Activated CD8-positive, alpha-beta memory T cell treated with anti-CD3 and anti-CD28 coated beads, Interleukin-2, amount 10 ng/mL, durations not matched to agents 7 days and 5 days (primary cell): ENCODE measurements at regions of chr1 and their contacts with region 1.

Region 1: GRCh38 chr1:230120926-230121381 is 53.9 kb downstream of the GALNT2 start:
- DNase-seq: no peak
- ATAC-seq: no peak
- H3K4me3 Mint-ChIP-seq: no peak overlapping the region
- H3K27ac Mint-ChIP-seq: no peak overlapping the region
- H3K4me1 Mint-ChIP-seq: peaks cover 53% of the 10 kb centered on the region
- H3K27me3 Mint-ChIP-seq: peaks cover 7% of the 10 kb centered on the region

Region 2: DNA sequence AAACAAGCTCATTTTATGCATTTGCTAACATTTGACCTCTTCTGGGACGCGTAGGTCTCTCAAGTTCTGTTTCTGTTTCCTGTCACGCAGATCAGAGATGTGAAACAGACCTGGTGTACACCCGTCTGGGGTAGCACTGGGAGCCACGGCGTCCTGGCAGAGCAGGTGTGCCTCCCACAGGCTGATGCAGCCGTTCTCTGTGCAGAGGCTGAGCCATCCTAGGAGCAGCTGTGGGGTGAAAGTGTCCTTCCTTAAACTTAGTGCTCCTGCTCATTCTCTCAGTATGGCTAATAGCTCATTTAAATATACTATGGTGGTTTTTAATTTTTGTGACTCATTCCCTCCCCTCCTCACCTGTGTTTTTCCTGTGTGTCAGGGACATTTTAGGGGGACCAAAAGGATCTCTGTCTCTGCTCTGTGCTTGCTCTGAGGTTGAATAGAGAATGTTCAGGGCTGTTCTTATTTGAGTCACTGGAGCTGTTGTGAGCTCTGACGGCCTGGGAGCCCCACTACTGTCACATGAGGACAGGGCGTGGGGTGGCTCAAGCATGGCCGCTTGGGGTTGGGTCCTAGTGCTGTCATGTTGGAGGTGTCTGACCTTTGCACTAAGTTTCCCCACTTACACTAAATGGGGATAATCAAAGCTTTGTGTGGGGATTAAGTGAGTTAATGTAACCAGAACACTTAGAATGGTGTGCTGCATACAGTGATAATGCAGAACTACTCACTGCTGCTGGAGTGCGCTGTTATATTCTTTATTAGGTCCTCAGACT is 10.9 kb before region 1 on chr1:
- CTCF ChIA-PET with region 1: interaction called, 36 read pairs
- DNase-seq: peak; percentile 83
- ATAC-seq: peak; percentile 84
- H3K4me3 Mint-ChIP-seq: peak overlapping the region; percentile 5
- H3K27ac Mint-ChIP-seq: peak overlapping the region; percentile 76
- H3K4me1 Mint-ChIP-seq: peaks cover 70% of the 10 kb centered on the region
- H3K27me3 Mint-ChIP-seq: no peaks in the 10 kb centered on the region

Region 3: GRCh38 chr1:230167419-230167852 is 46.5 kb after region 1 on chr1:
- CTCF ChIA-PET with region 1: interaction called, 16 read pairs
- DNase-seq: peak; percentile 61
- ATAC-seq: peak; percentile 82
- H3K4me3 Mint-ChIP-seq: no peak overlapping the region
- H3K27ac Mint-ChIP-seq: peak overlapping the region; percentile 1
- H3K4me1 Mint-ChIP-seq: peaks cover 30% of the 10 kb centered on the region
- H3K27me3 Mint-ChIP-seq: no peaks in the 10 kb centered on the region